BJ (cell line): ENCODE measurements at regions of chr9 and their contacts with region 1.

Region 1: GRCh38 chr9:4382722-4383317 is 83.0 kb upstream of the GLIS3 start:
- DNase-seq: no peak
- H3K4me3 ChIP-seq: no peak overlapping the region
- H3K27me3 ChIP-seq: no peaks in the 10 kb centered on the region; the same call in 1 of the 2 replicates
- CTCF ChIP-seq: peak; percentile 55

Region 2: GRCh38 chr9:4289411-4290380 is 93.1 kb before region 1 on chr9:
- CTCF ChIA-PET with region 1: no interaction called
- POLR2A ChIA-PET with region 1: no interaction called
- DNase-seq: no peak
- H3K4me3 ChIP-seq: no peak overlapping the region
- H3K27me3 ChIP-seq: no peaks in the 10 kb centered on the region
- CTCF ChIP-seq: no peak

Region 3: DNA sequence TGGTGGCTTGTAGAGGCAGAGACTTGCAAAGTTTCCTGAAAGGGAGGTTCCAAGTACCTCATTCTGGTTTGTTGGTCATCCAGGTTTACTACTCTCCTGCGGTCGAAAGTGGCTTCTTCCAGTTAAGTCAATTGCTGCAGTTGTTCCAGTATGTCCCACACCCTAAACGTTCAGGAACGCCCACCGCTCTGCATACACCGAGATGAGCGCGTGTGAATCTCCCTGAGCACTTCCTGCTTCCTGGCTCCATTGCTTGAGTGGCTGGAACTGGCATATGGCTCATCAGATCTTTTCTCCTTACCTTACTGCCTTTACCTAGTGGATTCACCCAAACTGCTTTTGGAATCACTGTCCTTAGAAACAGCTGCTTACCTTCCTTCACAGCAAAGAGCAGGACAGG is 23.8 kb before region 1 on chr9:
- CTCF ChIA-PET with region 1: no interaction called
- POLR2A ChIA-PET with region 1: no interaction called
- DNase-seq: no peak
- H3K4me3 ChIP-seq: no peak overlapping the region
- H3K27me3 ChIP-seq: peaks cover 5% of the 10 kb centered on the region
- CTCF ChIP-seq: no peak

Region 4: GRCh38 chr9:4640027-4640426 is 257.2 kb after region 1 on chr9:
- CTCF ChIA-PET with region 1: interaction called, 38 read pairs
- POLR2A ChIA-PET with region 1: no interaction called
- DNase-seq: no peak
- H3K4me3 ChIP-seq: no peak overlapping the region
- H3K27me3 ChIP-seq: no peaks in the 10 kb centered on the region
- CTCF ChIP-seq: peak; percentile 52